OCI-LY7 (cell line): ENCODE measurements at regions of chr19 and their contacts with region 1.

Region 1: GRCh38 chr19:50607874-50608785 is 31.6 kb downstream of the SYT3 start:
- DNase-seq: peak; percentile 74
- H3K4me3 ChIP-seq: no peak overlapping the region
- H3K27ac ChIP-seq: no peak overlapping the region
- H3K4me1 ChIP-seq: no peaks in the 10 kb centered on the region
- CTCF ChIP-seq: peak; percentile 76

Region 2: DNA sequence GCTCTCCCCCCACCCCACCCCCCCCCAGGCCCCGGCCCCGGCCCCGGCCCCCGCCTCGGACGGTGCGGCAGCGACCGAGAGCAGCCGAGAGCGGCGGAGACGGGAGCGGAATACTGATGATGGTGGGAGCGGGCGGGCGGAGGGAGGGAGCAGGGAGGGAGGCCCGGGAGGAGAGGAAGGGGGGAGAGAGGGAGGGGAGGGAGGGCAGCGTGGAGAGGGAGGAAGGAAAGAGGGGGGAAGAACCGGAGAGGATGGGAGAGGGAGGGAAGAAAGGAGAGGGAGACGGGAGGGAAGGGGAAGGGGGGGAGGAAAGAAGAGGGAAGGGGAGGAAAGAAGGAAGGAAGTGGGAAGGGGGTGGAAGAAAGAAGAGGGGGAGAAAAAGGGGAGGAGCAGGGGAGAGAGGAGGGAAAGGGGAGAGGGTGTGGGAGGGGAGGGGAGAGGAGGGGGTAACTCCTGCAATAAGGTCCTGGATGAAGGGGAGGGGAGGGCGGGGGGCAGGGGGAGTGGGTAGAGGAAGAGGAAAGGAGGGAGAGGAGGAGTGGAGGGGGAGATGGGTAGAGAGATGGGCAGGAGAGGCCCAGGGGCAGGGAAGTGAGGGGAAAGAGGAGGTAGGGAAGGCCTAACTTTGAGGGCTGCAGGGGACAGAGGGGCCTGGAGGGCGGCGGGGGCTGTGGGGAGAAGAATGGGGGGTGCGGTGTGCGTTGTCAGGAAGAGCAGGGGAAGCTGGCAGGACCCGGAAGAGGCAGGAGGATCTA is 39.6 kb before region 1 on chr19 and contains the start of gene LRRC4B:
- CTCF ChIA-PET with region 1: no interaction called
- POLR2A ChIA-PET with region 1: no interaction called
- intact Hi-C with region 1: no loop called
- DNase-seq: no peak
- H3K4me3 ChIP-seq: no peak within 1 kb of the TSS
- H3K27ac ChIP-seq: no peak within 1 kb of the TSS
- H3K4me1 ChIP-seq: no peaks in the 10 kb centered on the region
- CTCF ChIP-seq: no peak
- total RNA-seq, gene LRRC4B: not detected in 2 replicates

Region 3: DNA sequence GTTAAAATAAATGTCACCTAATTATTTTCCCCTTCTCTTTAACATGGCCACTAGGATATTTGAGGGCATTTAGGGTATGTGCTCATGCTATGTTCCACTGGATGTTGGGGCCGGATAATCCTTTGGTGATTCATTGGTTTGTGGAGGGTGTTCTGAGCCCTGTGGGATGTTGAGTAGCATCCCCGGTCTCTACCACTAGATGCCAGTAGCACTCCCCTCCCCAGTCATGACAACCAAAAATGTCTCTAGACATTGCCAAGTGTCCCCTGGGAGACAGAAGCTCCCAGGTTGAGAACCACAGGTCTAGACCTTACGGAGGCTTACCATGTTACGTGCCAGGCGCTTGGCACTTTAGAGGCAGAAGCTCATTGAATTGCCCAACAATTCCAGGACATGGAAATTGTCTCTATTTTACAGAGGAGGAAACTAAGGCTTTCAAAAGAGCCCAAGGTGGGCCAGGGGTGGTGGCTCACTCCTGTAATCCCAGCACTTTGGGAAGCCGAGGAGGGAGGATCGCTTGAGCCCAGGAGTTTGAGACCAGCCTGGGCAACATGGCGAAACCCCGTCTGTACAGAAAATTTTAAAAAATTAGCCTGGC is 97.4 kb after region 1 on chr19:
- CTCF ChIA-PET with region 1: no interaction called
- POLR2A ChIA-PET with region 1: no interaction called
- intact Hi-C with region 1: loop called (anchors 5 kb)
- DNase-seq: peak; percentile 67
- H3K4me3 ChIP-seq: no peak overlapping the region
- H3K27ac ChIP-seq: no peak overlapping the region
- H3K4me1 ChIP-seq: no peaks in the 10 kb centered on the region
- CTCF ChIP-seq: peak; percentile 85